ENCODE measurements at regions of chr1 and their contacts with region 1.

Region 1: GRCh38 chr1:11019971-11020370 is 7.5 kb downstream of the TARDBP start:
- DNase-seq: no peak
- ATAC-seq: no peak
- H3K4me3 ChIP-seq: no peak overlapping the region
- H3K27ac ChIP-seq: no peak overlapping the region
- H3K4me1 ChIP-seq: peaks cover 0 to 32% (median 14%) of the 10 kb centered on the region in 12 donors
- H3K27me3 ChIP-seq: no peaks in the 10 kb centered on the region
- CTCF ChIP-seq: no peak
- POLR2A ChIP-seq: no peak

Region 2: DNA sequence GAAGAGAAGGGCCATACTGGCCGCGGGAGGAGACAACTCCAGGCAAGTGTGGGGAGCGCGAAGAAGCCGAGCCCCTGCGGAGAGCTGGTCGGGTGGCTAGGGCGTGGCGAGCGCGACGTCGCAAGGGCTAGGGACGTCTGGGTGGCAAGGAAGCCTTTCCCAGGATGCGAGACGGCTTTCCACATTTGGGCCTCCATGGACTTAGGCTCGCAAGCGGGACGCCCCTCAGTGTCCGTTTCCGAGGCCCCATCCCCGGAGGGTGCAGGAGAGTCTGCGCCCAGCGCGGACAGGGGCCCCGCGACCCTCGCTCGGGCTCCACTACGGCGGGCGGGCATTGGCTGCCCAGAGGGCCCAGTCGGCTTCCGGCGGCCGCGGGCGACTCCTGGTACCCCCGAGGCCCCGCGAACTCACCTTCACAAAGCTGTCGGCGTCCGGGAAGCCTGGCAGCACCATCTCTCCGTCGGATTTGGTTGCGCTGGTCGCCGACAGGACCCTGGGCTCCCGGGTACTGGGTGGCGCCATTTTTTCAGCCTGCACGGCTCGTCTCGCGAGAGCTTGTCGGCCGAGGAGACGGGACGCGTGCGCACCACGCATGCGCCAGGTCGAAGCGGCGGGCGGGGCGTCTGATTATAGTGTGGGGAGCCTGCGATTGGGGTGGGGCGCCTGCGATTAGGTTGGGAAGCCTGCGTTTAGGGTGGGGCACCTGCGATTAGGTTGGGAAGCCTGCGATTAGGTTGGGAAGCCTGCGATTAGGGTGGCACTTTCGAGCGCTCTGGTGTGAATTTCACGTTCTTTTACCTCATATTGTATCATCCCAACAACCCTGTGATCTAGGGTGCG is 79.6 kb after region 1 on chr1 and contains the start of gene EXOSC10:
- intact Hi-C with region 1: loop called in 1 of 10 experiments (anchors 5 kb)
- DNase-seq: peak; percentile 93 to 98 (median 95)
- ATAC-seq: peak; percentile 94 to 99 (median 98)
- H3K4me3 ChIP-seq: peak within 1 kb of the TSS; percentile 70 to 100 (median 87)
- H3K27ac ChIP-seq: peak within 1 kb of the TSS; percentile 37 to 93 (median 83)
- H3K4me1 ChIP-seq: peaks cover 0 to 21% (median 13%) of the 10 kb centered on the region in 12 donors
- H3K27me3 ChIP-seq: no peaks in the 10 kb centered on the region
- CTCF ChIP-seq: peak in 1 of 12 donors; percentile 23
- POLR2A ChIP-seq: peak in 1 of 2 donors; percentile 63
- total RNA-seq, gene EXOSC10: 19.4 to 34.8 (median 22.5) TPM